ENCODE measurements at regions of chr1 and their contacts with region 1.

Region 1: DNA sequence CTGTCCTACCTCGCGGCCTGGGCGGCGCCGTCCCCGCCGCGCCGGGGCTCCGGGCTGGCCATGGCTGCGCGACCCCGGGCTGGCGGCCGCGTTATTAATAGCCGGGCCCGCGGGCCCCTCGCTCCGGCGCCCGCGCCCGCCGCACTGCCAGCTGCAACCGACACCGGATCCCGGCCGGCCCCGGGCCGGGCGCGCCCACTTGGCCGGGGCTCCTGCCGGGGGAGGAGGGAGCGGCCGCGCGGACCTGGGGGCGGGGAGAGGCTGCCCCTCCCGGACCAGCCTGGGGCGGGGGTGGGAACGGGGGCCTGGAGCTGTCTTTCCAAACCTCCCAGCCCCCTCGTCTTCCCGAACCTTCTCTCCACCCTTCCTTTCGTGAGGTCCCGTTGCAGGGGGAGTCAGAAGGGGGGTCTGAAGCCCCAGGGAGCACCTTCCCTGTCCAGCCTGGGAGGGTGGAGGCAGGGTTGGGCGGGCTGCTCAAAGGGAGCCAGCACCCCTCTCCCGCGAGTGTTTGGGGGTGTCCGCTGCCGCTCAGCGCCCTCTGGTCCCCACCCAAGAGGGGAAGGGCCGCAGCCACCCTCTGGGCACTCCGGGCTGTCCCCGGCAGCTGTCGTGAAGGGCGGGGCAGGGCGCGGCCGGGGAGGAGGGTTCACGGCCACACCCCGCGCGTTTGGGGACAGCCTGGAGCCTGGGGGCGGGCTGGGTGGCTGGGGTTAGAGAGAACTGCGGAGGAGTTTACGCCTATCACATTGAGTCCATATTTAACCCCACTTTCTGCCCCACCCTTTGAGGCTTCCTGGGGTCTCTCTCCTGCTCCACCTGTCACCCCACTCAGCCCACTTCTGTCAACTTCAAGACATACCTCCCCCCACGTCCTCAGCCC is at the start of gene SYNC:
- DNase-seq: peak; percentile 78
- ATAC-seq: peak; percentile 55
- H3K4me3 ChIP-seq: peak within 1 kb of the TSS; percentile 77
- H3K27ac ChIP-seq: peak within 1 kb of the TSS; percentile 97
- H3K4me1 ChIP-seq: peaks cover 15% of the 10 kb centered on the region
- H3K27me3 ChIP-seq: no peaks in the 10 kb centered on the region
- CTCF ChIP-seq: no peak
- POLR2A ChIP-seq: peak; percentile 78
- RAD21 ChIP-seq: 0 out of 2 replicates have a peak, but pooled peaks have one; percentile 1
- total RNA-seq, gene SYNC: 103 and 139 TPM in 2 replicates

Region 2: GRCh38 chr1:32650752-32651460 is 51.9 kb before region 1 on chr1 and contains the start of gene RBBP4:
- CTCF ChIA-PET with region 1: no interaction called
- POLR2A ChIA-PET with region 1: no interaction called
- dilution Hi-C with region 1: no loop called
- in situ Hi-C with region 1: no loop called
- intact Hi-C with region 1: loop called (anchors 2 kb)
- DNase-seq: peak; percentile 96
- ATAC-seq: peak; percentile 95
- H3K4me3 ChIP-seq: peak within 1 kb of the TSS; percentile 97
- H3K27ac ChIP-seq: peak within 1 kb of the TSS; percentile 96
- H3K4me1 ChIP-seq: peaks cover 3% of the 10 kb centered on the region; the same call in 1 of the 2 replicates
- H3K27me3 ChIP-seq: no peaks in the 10 kb centered on the region
- CTCF ChIP-seq: no peak
- POLR2A ChIP-seq: peak; percentile 5
- RAD21 ChIP-seq: no peak
- total RNA-seq, gene RBBP4: 138 and 161 TPM in 2 replicates